T-cell (primary cell): ENCODE measurements at regions of chr4 and their contacts with region 1.

Region 1: DNA sequence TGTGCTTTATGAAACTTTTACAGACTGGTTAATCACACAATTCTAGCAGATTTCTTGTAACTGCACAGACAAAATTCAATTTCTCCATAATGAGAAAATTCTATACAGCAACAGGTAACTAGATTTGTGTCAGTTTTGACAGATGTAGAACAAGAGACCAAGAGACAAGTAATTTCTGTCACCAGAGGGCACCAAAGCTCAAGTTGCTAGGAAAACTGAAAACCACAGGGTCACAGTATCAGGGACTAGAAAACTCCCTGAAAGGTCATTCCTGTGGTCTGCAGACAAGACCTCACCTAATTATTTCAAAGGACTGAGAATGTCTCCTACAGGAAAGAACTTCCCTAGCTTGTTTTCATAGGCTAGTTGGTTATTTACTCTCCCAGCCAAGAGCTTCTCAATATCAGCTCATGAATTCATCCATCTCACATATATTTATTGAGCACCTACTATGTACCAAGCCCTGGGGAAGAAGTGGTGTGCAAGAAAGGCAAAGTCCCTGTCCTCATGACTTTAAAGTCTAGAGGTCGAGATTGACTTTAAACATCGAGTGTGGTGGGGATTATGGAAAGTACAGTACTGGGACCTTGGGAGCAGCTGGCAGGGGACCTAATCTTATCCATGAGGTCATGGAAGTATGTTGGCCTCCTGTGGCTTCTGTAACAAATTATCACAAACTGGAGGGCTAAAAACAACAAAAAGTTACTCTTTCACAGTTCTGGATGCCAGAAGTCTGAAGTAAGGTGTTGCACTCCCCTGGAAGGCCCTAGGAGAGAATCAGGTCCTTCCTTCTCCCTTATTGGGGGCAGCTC is 47.8 kb upstream of the SETD7 start:
- DNase-seq: peak in 16 of 35 experiments; percentile 2 to 67 (median 10)
- ATAC-seq: peak in 1 of 4 experiments; percentile 61
- H3K4me3 ChIP-seq: no peak overlapping the region
- H3K4me3 Mint-ChIP-seq: no peak overlapping the region
- H3K27ac ChIP-seq: no peak overlapping the region
- H3K27ac Mint-ChIP-seq: no peak overlapping the region
- H3K4me1 ChIP-seq: peaks cover 0 to 8% of the 10 kb centered on the region in 2 experiments
- H3K4me1 Mint-ChIP-seq: peaks cover 15 to 18% (median 16%) of the 10 kb centered on the region in 3 donors
- H3K27me3 ChIP-seq: peaks cover 0 to 8% of the 10 kb centered on the region in 2 experiments
- H3K27me3 Mint-ChIP-seq: peaks cover 12 to 23% of the 10 kb centered on the region in 2 donors

Region 2: GRCh38 chr4:139042981-139043460 is 560.8 kb before region 1 on chr4:
- CTCF ChIA-PET with region 1: interaction called in 1 of 2 experiments, 11 read pairs
- POLR2A ChIA-PET with region 1: no interaction called
- DNase-seq: no peak
- ATAC-seq: no peak
- H3K4me3 ChIP-seq: no peak overlapping the region
- H3K4me3 Mint-ChIP-seq: no peak overlapping the region
- H3K27ac ChIP-seq: no peak overlapping the region
- H3K27ac Mint-ChIP-seq: peak overlapping the region in 1 of 2 donors; percentile 34
- H3K4me1 ChIP-seq: no peaks in the 10 kb centered on the region
- H3K4me1 Mint-ChIP-seq: peaks cover 9% of the 10 kb centered on the region in 3 donors
- H3K27me3 ChIP-seq: no peaks in the 10 kb centered on the region
- H3K27me3 Mint-ChIP-seq: no peaks in the 10 kb centered on the region

Region 3: DNA sequence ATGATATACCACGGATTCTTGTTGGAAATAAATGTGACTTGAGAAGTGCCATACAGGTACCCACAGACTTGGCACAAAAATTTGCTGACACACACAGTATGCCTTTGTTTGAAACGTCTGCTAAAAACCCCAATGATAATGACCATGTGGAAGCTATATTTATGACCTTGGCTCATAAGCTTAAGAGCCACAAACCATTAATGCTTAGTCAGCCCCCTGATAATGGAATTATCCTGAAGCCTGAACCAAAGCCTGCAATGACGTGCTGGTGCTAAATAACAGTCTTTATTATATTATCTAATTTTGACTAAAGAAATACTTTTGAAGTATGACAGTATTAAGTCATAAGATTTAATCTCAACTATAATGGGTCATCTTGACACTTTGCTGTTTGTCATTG is 130.9 kb before region 1 on chr4:
- CTCF ChIA-PET with region 1: no interaction called
- POLR2A ChIA-PET with region 1: no interaction called
- DNase-seq: no peak
- ATAC-seq: no peak
- H3K4me3 ChIP-seq: no peak overlapping the region
- H3K4me3 Mint-ChIP-seq: no peak overlapping the region
- H3K27ac ChIP-seq: no peak overlapping the region
- H3K27ac Mint-ChIP-seq: no peak overlapping the region
- H3K4me1 ChIP-seq: peaks cover 0 to 4% of the 10 kb centered on the region in 2 experiments
- H3K4me1 Mint-ChIP-seq: peaks cover 20 to 25% (median 21%) of the 10 kb centered on the region in 3 donors
- H3K27me3 ChIP-seq: no peaks in the 10 kb centered on the region
- H3K27me3 Mint-ChIP-seq: no peaks in the 10 kb centered on the region

Region 4: GRCh38 chr4:139651282-139652194 is 47.8 kb after region 1 on chr4:
- CTCF ChIA-PET with region 1: interaction called, 11 to 13 read pairs
- POLR2A ChIA-PET with region 1: no interaction called
- DNase-seq: peak; percentile 30 to 85 (median 60)
- ATAC-seq: peak; percentile 78 to 88 (median 83)
- H3K4me3 ChIP-seq: no peak overlapping the region
- H3K4me3 Mint-ChIP-seq: no peak overlapping the region
- H3K27ac ChIP-seq: no peak overlapping the region
- H3K27ac Mint-ChIP-seq: no peak overlapping the region
- H3K4me1 ChIP-seq: peaks cover 0 to 4% of the 10 kb centered on the region in 2 experiments
- H3K4me1 Mint-ChIP-seq: peaks cover 4 to 9% (median 7%) of the 10 kb centered on the region in 3 donors
- H3K27me3 ChIP-seq: peaks cover 0 to 6% of the 10 kb centered on the region in 2 experiments
- H3K27me3 Mint-ChIP-seq: peaks cover 3 to 6% of the 10 kb centered on the region in 2 donors

Region 5: DNA sequence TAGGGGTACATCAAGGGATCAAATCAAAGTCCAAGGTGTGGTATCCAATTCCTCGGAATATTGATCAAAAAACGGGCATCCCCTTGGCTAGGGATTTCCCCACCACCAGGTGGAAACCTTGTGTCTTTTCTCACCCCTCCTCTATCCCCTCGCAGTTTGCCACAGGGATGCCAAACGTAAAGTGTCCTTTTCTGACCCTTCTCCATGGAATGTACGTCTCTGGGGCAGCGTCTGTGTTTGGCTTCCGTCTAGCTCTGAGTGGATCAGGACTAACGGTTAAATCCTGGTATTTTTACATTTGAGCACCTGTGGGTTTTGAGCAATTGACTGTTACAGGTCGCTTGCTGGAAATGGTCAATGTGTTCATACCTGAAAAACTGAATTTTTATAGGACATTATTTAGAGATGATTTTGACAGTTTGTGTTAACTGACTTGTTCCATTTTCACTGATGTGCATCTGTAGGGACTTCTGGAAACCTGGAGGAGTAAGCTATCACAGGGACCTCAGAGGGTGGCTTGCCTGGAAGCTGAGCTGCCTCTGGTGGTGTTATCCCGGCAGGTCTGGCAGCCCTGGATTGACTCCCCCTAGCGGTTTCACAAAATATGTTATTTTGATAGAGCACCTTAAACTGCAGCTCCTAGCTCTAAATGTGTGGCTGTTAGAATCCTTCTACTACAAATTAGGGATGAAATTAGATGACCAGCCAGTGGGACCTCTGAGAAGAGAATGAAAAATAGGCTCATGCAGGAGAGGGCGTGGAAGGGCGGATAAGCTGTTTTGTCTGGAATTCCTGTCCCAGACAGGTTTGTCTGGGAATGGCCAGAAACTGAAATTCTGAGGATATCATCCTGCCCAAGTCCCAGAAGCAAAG is 53.1 kb after region 1 on chr4:
- CTCF ChIA-PET with region 1: interaction called, 11 to 13 read pairs
- POLR2A ChIA-PET with region 1: interaction called in 1 of 2 experiments, 4 read pairs
- DNase-seq: peak in 33 of 35 experiments; percentile 10 to 72 (median 32)
- ATAC-seq: peak; percentile 43 to 84 (median 48)
- H3K4me3 ChIP-seq: no peak overlapping the region
- H3K4me3 Mint-ChIP-seq: peak overlapping the region; percentile 51 to 69 (median 60)
- H3K27ac ChIP-seq: no peak overlapping the region
- H3K27ac Mint-ChIP-seq: peak overlapping the region; percentile 95 to 98
- H3K4me1 ChIP-seq: peaks cover 0 to 14% of the 10 kb centered on the region in 2 experiments
- H3K4me1 Mint-ChIP-seq: peaks cover 22 to 25% (median 23%) of the 10 kb centered on the region in 3 donors
- H3K27me3 ChIP-seq: peaks cover 0 to 6% of the 10 kb centered on the region in 2 experiments
- H3K27me3 Mint-ChIP-seq: peaks cover 3 to 8% of the 10 kb centered on the region in 2 donors